ENCODE measurements at regions of chr22 and their contacts with region 1.

Region 1: DNA sequence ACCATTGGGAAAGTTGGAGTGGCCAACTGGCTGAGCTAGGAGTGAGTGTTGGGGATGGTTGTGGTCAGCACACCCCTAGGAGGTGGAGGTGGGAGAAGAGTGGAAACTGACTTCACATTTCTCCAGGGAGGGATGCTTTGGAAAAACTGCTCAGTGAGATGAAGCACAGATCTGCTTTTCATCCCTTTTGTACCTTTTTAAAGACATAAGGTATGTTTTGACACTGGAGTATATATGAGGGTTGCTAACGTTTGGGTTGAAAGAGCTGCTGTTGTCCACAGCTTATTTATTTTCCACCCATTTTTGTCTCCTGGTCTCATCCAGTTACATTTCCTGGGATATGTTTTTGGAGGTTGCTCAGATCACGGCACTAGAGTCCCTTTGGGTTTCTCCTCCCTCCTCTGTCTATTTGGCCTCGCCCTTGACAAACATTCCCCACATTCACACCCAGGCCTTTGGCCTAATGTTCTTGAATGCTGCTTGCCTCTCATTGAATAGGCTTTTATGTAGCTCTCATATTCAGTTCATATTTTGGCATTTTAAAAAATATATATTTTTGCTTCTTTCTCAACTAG is 8.3 kb downstream of the SREBF2 start:
- DNase-seq: peak in 1 of 2 experiments; percentile 69
- H3K4me3 ChIP-seq: no peak overlapping the region
- H3K4me3 Mint-ChIP-seq: peak overlapping the region; percentile 37
- H3K27ac Mint-ChIP-seq: peak overlapping the region; percentile 89
- H3K4me1 ChIP-seq: peaks cover 71% of the 10 kb centered on the region
- H3K4me1 Mint-ChIP-seq: peaks cover 52% of the 10 kb centered on the region
- H3K27me3 ChIP-seq: no peaks in the 10 kb centered on the region
- H3K27me3 Mint-ChIP-seq: no peaks in the 10 kb centered on the region
- CTCF ChIP-seq: no peak

Region 2: DNA sequence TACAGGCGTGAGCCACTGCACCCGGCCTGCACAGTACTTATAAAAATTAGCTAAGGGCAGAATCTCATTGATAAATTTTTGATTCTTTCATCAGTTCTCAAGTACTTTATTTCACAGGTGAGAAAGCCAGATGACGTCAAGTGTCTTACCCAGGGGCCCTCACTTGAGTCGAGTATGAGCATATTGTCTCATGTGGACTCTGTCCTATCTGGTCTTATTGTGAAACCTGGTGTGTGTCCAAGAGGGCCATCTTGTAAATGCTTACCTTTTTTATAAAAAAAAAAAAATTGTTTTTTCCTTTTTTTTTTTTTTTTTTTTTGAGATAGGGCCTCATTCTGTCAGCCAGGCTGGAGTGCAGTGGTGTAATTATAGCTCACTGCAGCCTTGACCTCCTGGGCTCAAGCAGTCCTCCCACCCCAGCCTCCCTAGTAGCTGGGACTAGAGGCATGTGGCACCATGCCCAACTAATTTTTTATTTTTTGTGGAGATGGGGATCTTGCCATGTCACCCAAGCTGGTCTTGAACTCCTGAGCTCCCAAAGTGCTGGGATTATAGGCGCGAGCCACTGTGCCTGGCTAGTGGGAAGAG is 366.2 kb before region 1 on chr22:
- CTCF ChIA-PET with region 1: no interaction called
- POLR2A ChIA-PET with region 1: interaction called, 16 read pairs
- intact Hi-C with region 1: no loop called
- DNase-seq: no peak
- H3K4me3 ChIP-seq: no peak overlapping the region
- H3K4me3 Mint-ChIP-seq: no peak overlapping the region
- H3K27ac Mint-ChIP-seq: no peak overlapping the region
- H3K4me1 ChIP-seq: 0 out of 2 replicates have a peak, but pooled peaks cover 7% of the 10 kb centered on the region
- H3K4me1 Mint-ChIP-seq: peaks cover 6% of the 10 kb centered on the region
- H3K27me3 ChIP-seq: no peaks in the 10 kb centered on the region
- H3K27me3 Mint-ChIP-seq: no peaks in the 10 kb centered on the region
- CTCF ChIP-seq: no peak

Measured in Caco-2 (cell line).